ENCODE measurements at regions of chr7 and their contacts with region 1.

Region 1: GRCh38 chr7:85030893-85031292 is 156.0 kb downstream of the SEMA3D start:
- DNase-seq: no peak
- H3K4me3 ChIP-seq: no peak overlapping the region
- H3K27ac ChIP-seq: no peak overlapping the region
- H3K27me3 ChIP-seq: peaks cover 0 to 3% (median 0%) of the 10 kb centered on the region in 45 donors
- CTCF ChIP-seq: peak; percentile 38 to 82 (median 60)

Region 2: GRCh38 chr7:85845616-85846015 is 814.7 kb after region 1 on chr7:
- intact Hi-C with region 1: loop called (anchors 5 to 10 kb)
- DNase-seq: no peak
- H3K4me3 ChIP-seq: no peak overlapping the region
- H3K27ac ChIP-seq: no peak overlapping the region
- H3K27me3 ChIP-seq: no peaks in the 10 kb centered on the region
- CTCF ChIP-seq: no peak

Region 3: DNA sequence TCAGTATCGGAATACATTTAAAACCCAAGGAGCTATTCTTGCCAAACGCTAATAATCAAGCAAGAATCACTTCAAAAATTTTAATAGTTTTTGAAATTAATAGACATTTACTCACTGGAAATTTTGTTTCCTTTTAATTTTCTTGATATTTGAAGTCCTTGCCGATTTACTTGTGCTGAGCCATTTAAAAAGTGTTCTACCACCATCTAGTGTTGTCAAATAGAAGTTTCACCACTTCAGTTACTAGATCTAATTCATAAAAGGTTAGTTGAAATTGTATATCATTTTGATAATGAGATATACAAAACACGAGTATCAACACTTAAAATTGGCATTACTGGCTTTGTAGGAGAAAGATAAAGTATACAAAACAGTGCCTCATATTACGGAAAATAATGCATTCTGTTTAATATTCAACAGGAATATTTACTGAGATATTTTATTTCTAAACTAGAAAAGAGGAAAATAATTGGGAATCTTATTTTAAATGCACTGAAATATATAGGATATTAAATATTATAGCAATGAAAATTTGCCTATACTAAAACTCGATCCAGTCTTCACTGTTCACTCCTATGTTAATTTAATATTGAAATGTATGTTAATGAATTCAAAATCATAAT is 820.8 kb after region 1 on chr7:
- intact Hi-C with region 1: loop called (anchors 5 to 10 kb)
- DNase-seq: no peak
- H3K4me3 ChIP-seq: no peak overlapping the region
- H3K27ac ChIP-seq: no peak overlapping the region
- H3K27me3 ChIP-seq: no peaks in the 10 kb centered on the region
- CTCF ChIP-seq: peak; percentile 25 to 75 (median 56)